Body of pancreas (tissue), 4 donors: ENCODE measurements at regions of chr2 and their contacts with region 1.

Region 1: GRCh38 chr2:176126929-176127773 is 2.4 kb upstream of the HOXD8 start:
- DNase-seq: peak; percentile 70 to 80 (median 74)
- ATAC-seq: no peak
- H3K4me3 ChIP-seq: no peak overlapping the region
- H3K27ac ChIP-seq: no peak overlapping the region
- H3K4me1 ChIP-seq: peaks cover 23% of the 10 kb centered on the region
- H3K27me3 ChIP-seq: peaks cover 0 to 62% of the 10 kb centered on the region in 2 donors
- CTCF ChIP-seq: peak; percentile 54 to 99 (median 87)
- POLR2A ChIP-seq: no peak

Region 2: GRCh38 chr2:176643646-176644045 is 516.5 kb after region 1 on chr2:
- intact Hi-C with region 1: loop called (anchors 5 kb)
- DNase-seq: peak in 2 of 4 donors; percentile 7 to 16
- ATAC-seq: peak; percentile 40
- H3K4me3 ChIP-seq: no peak overlapping the region
- H3K27ac ChIP-seq: no peak overlapping the region
- H3K4me1 ChIP-seq: no peaks in the 10 kb centered on the region
- H3K27me3 ChIP-seq: no peaks in the 10 kb centered on the region
- CTCF ChIP-seq: no peak
- POLR2A ChIP-seq: no peak

Region 3: GRCh38 chr2:176702169-176702568 is 575.0 kb after region 1 on chr2:
- intact Hi-C with region 1: no loop called
- DNase-seq: no peak
- ATAC-seq: no peak
- H3K4me3 ChIP-seq: no peak overlapping the region
- H3K27ac ChIP-seq: no peak overlapping the region
- H3K4me1 ChIP-seq: peaks cover 6% of the 10 kb centered on the region
- H3K27me3 ChIP-seq: no peaks in the 10 kb centered on the region
- CTCF ChIP-seq: no peak
- POLR2A ChIP-seq: no peak

Region 4: DNA sequence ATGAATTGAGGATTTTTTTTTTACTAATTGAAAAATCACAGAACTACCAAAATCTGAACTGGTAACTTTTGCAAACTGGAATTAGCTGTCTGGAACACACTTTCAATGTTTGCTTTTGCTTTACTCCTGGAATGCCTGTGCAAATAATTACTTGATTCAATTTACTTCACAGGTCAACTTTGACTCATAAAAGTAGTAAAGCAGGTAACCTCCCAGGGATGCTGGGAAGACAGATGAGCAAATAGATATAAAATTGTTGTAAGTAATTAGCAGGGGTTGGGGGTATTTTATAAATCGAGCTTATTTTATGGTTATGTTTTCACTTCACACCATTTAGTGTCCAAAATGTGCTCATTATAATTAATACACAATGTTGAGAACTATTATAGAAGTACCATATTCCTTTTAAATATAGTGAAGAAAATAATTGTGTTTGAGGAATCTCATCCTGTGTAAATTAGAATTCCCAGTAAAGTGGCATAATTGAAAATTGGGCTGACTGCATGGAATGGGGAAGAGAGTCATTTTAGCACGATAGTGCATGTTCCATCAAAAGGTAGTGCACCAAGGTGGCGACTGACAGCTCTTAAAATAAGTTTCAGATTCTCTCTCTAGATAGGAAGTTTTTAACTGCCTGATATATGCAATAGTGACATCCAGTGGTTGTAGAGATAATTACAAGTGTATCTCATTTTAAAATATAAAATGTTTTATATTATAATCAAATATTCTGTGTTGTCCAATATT is 687.3 kb after region 1 on chr2:
- intact Hi-C with region 1: loop called (anchors 10 kb)
- DNase-seq: no peak
- ATAC-seq: peak; percentile 35
- H3K4me3 ChIP-seq: no peak overlapping the region
- H3K27ac ChIP-seq: no peak overlapping the region
- H3K4me1 ChIP-seq: no peaks in the 10 kb centered on the region
- H3K27me3 ChIP-seq: no peaks in the 10 kb centered on the region
- CTCF ChIP-seq: peak; percentile 46 to 69 (median 60)
- POLR2A ChIP-seq: no peak